AG04450 (cell line): ENCODE measurements at regions of chr2 and their contacts with region 1.

Region 1: GRCh38 chr2:16756831-16757644 is 91.4 kb upstream of the CYRIA start:
- DNase-seq: peak; percentile 43
- H3K4me3 ChIP-seq: no peak overlapping the region
- H3K27ac ChIP-seq: no peak overlapping the region
- H3K27me3 ChIP-seq: no peaks in the 10 kb centered on the region
- CTCF ChIP-seq: peak; percentile 85

Region 2: DNA sequence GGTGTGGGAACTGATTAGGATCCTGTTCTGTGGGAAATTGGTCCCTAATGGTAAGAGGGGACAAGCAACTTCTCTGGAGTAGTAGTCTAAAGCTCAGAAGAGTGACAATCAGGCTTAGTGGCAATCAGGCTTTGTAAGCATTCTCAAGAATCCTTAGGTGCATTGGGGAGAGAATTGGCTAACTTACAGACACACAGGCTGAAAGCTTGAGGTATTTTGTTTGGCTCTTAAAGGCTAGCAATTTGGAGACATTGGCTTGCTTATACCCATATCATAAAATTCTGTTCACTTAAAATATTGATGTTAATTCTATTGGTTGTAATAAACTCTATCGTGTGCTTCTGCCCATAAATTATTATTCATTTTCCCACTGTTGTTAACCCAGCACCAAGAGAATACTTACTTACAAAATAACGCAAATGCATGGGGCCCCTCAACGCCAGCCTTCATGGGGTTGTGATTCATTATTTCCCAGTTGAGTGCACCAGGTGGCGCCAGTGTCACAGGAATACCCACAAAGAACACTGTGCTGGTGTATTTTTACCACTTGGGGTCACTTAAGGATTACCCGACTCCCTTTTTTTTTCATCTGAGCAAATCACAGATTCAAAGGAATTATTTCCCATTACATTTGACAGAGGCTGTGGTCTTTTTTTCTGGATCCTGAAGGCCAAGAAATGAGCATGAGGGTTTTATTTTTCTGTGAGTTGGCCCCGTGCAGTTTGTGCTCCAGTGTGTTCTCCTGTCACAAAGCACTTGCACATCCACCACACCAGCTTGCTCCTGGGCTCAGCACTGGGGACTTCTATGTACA is 1119.9 kb before region 1 on chr2:
- CTCF ChIA-PET with region 1: interaction called, 18 read pairs
- POLR2A ChIA-PET with region 1: no interaction called
- DNase-seq: peak; percentile 46
- H3K4me3 ChIP-seq: no peak overlapping the region
- H3K27ac ChIP-seq: no peak overlapping the region
- H3K27me3 ChIP-seq: no peaks in the 10 kb centered on the region
- CTCF ChIP-seq: peak; percentile 87

Region 3: DNA sequence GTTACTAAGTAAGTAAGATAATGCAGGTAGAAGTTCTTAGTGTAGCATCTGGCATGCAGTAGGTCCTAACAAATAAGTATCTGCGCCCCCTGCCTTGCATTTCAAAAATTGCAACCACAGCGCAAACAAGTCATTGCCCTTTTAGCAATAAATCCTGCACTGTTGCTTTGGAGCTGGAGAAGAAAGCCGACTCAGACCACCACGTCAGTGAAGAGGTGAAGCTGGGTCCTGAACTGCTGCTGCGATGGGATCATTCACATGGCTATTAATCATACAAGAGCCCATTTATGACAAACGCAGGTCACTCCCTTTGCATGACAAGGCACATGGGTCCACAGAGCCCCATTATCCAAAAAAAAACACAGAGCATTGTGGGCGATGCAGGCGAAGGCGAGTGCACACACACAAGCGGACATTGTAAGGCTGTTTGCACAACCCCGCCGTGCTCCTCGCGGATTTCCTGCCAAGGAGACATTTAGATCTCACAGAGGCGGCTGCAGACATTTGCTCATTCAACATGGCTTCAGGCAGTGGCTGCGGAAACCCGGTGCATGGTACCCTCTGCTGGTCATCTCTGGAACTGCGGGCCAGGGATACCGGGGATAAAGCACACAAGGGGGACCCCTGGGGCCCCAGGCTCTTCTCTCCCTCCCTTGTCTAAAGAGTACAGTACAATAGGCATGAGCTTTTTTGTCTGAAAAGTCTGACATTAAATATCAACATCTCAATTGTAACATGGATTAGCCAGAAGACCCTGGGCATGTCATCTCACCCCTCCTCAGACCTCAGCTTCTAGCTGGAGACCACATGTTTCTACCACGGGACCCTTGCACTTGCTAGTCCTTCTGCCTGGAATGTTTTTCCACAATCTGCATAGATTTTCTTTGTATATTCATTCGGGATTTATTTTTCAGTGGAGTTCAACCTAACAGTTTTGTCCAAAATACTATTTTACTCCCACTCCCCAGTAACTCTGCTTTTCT is 148.1 kb before region 1 on chr2:
- CTCF ChIA-PET with region 1: interaction called, 37 read pairs
- POLR2A ChIA-PET with region 1: no interaction called
- DNase-seq: peak; percentile 37
- H3K4me3 ChIP-seq: peak overlapping the region; percentile 54
- H3K27ac ChIP-seq: no peak overlapping the region
- H3K27me3 ChIP-seq: peaks cover 3% of the 10 kb centered on the region
- CTCF ChIP-seq: peak; percentile 99

Region 4: GRCh38 chr2:16617282-16618261 is 139.5 kb before region 1 on chr2:
- CTCF ChIA-PET with region 1: interaction called, 37 read pairs
- POLR2A ChIA-PET with region 1: no interaction called
- DNase-seq: no peak
- H3K4me3 ChIP-seq: no peak overlapping the region
- H3K27ac ChIP-seq: no peak overlapping the region
- H3K27me3 ChIP-seq: peaks cover 3% of the 10 kb centered on the region
- CTCF ChIP-seq: peak; percentile 56

Region 5: DNA sequence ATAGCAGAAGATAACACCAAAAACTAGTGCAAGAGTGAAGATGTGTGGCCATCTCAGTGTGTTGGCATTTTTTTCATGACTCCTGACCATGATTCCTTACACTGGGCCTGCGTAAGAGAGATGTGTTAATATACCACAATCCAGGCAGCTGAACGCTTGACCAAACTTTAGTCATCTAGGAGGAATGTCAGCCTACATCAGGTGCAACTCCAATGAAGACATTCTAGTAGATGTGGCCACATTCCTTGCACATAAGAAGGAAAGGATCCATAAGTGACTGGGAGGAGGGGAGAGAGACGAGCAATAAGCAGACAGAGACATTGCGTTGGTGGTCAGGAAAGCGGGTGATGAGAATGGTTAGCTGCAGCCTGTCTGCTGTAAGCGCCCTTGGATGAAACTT is 134.0 kb before region 1 on chr2:
- CTCF ChIA-PET with region 1: interaction called, 30 read pairs
- POLR2A ChIA-PET with region 1: no interaction called
- DNase-seq: peak; percentile 53
- H3K4me3 ChIP-seq: no peak overlapping the region
- H3K27ac ChIP-seq: peak overlapping the region; percentile 32
- H3K27me3 ChIP-seq: no peaks in the 10 kb centered on the region
- CTCF ChIP-seq: no peak

Region 6: DNA sequence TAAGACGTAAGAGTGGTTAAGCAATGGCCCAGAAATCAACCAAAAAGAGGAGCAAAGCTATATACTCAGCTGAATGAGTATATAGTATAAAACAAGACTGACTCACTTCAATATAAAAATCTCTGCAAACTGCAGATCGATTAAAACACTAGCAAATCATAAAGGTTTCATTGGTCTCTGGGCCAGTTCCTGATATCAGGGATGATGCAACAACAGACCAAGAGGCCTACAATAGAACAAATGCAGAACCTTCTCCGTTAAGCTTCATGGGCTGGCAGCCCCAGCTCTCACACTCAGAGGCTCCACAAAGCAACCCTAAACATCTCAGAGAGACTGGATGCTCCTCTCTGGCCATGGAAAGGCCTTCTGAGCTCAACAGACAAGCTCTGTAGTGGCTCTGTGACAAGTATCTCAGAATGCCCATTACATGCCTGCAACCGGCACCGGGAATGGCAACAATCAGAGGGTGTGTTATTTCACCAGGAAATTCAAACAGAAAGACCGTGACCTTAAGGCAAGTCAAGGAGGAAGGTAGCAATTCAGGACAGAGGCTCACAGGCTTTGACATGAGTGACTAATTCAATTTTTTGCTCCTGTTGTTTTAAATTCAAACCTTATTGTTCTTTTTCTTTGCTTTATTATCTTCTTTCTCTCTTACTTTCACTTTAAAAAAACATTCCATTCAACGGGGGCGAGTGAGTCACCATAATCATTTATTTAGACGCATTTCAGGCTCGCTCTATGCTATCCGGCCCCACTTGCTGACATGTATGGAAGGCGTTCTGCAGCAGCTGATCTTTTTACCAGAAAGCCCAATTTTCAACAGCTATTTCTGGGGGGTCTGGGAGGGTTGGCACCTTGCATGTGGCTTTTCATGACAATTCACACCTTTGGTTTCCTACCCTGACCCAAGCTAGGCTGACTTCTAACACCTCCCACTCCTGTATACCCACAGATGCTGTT is 106.5 kb before region 1 on chr2:
- CTCF ChIA-PET with region 1: interaction called, 12 read pairs
- POLR2A ChIA-PET with region 1: no interaction called
- DNase-seq: no peak
- H3K4me3 ChIP-seq: peak overlapping the region; percentile 40
- H3K27ac ChIP-seq: peak overlapping the region; percentile 85
- H3K27me3 ChIP-seq: no peaks in the 10 kb centered on the region
- CTCF ChIP-seq: no peak

Region 7: GRCh38 chr2:16767789-16768476 is 10.9 kb after region 1 on chr2:
- CTCF ChIA-PET with region 1: interaction called, 10 read pairs
- POLR2A ChIA-PET with region 1: no interaction called
- DNase-seq: no peak
- H3K4me3 ChIP-seq: no peak overlapping the region
- H3K27ac ChIP-seq: no peak overlapping the region
- H3K27me3 ChIP-seq: peaks cover 2% of the 10 kb centered on the region
- CTCF ChIP-seq: no peak

Region 8: DNA sequence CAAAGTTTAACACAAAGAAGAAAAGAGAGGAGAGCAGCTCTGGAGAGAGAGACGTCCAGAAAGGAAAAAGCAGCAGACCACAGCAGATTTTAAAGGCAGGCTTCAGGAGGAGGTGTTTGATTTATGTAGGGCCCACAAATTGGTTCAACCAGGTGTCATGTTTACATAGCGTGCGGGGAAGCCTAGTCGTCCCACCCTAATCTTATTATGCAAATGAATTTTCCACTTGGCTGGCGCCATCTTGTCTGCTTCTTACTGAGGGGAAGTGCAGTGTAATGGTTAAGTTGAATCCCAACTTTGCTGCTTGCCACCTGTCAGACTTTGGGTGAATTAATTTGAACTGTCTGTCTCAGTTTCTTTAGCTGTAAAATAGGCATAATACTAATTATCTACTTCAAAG is 191.0 kb after region 1 on chr2:
- CTCF ChIA-PET with region 1: no interaction called
- POLR2A ChIA-PET with region 1: no interaction called
- DNase-seq: no peak
- H3K4me3 ChIP-seq: no peak overlapping the region
- H3K27ac ChIP-seq: no peak overlapping the region
- H3K27me3 ChIP-seq: no peaks in the 10 kb centered on the region
- CTCF ChIP-seq: no peak